Ascending aorta (tissue), 2 donors: ENCODE measurements at regions of chr11 and their contacts with region 1.

Region 1: DNA sequence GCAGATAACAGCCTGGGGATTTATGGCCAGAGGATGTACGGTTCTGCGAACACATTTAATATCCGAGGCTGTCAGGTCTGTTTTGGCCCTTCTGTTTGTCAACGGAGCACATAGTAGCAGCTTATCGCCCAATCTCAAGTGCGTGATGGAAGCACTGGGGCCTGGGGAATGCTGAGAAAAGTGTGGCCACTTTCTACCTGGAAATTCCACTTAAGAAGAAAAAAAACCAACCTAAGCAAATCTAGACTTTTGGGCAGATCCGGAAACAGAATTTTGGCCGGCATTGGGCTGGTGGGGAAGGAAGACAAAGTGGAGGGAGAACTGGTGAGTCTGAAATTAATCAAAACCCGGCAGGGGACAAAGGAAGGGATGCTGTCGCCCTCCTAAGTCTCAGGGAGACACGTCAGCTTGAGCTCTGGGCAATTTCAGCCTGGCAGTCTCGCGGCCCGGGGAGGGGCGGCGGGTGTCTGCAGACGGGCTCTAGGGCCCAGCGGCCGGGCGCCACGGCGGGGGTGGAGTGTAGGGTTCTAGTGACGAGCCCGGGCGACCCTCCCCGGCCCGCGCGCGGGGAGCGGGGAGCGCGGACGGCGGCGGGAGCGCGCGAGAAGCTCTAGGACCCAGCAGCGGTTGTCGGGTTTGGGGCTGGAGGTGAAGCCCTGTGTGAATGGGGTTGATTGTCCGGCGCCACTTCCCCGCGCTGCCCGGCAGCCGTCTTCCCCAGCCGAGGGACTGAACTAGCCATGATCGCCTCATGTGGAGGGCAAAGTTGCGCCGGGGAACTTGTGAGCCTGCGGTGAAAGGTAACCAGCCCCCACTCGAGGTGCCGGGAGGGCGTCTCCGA is at the start of gene AMOTL1:
- DNase-seq: peak; percentile 73 to 96
- H3K4me3 ChIP-seq: peak within 1 kb of the TSS; percentile 82 to 98
- H3K27ac ChIP-seq: peak within 1 kb of the TSS; percentile 89 to 98
- H3K4me1 ChIP-seq: peaks cover 0 to 15% of the 10 kb centered on the region in 2 donors
- H3K27me3 ChIP-seq: no peaks in the 10 kb centered on the region
- CTCF ChIP-seq: peak in 1 of 3 experiments; percentile 34
- total RNA-seq, gene AMOTL1: 32.6 TPM

Region 2: GRCh38 chr11:94543695-94544645 is 224.0 kb before region 1 on chr11 and contains the start of gene FUT4:
- intact Hi-C with region 1: loop called (anchors 10 kb)
- DNase-seq: peak; percentile 44 to 90
- H3K4me3 ChIP-seq: peak within 1 kb of the TSS; percentile 81 to 93
- H3K27ac ChIP-seq: peak within 1 kb of the TSS; percentile 97 to 100
- H3K4me1 ChIP-seq: peaks cover 7 to 14% of the 10 kb centered on the region in 2 donors
- H3K27me3 ChIP-seq: no peaks in the 10 kb centered on the region
- CTCF ChIP-seq: no peak
- total RNA-seq, gene FUT4: 3.2 TPM

Region 3: DNA sequence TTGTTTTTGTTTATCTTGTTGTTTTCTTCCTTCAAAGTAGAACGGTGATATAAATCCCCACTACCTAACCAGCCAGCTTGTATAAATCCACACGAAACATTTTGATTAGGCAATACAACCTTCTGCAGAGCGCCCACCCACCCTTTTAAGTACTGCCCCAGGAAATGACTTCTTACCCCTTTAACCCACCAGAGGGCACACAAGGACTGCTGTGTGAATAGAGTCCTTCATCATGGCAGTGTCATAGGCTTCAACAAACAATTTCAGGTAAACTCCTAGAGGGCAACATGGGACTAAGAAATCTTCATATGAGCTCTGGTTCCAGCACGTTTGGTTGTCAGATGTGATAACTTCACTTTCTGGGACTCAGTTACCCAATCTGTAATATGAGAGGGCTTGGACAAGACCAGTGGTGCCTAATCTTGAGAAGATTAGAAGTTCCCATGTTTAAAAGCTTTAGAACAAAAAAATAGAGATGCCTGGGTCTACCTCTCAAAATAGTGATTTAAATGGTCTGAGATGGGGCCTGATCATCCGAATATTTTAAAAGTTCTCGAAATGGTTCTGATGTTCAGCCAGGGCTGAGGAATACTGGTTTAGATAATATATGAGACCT is 144.8 kb before region 1 on chr11:
- intact Hi-C with region 1: loop called (anchors 10 kb)
- DNase-seq: no peak
- H3K4me3 ChIP-seq: no peak overlapping the region
- H3K27ac ChIP-seq: no peak overlapping the region
- H3K4me1 ChIP-seq: no peaks in the 10 kb centered on the region
- H3K27me3 ChIP-seq: no peaks in the 10 kb centered on the region
- CTCF ChIP-seq: peak; percentile 65 to 72 (median 68)

Region 4: GRCh38 chr11:94741022-94741679 is 26.8 kb before region 1 on chr11:
- intact Hi-C with region 1: loop called (anchors 2 kb)
- DNase-seq: no peak
- H3K4me3 ChIP-seq: peak overlapping the region; percentile 74
- H3K27ac ChIP-seq: no peak overlapping the region
- H3K4me1 ChIP-seq: peaks cover 4 to 5% of the 10 kb centered on the region in 2 donors
- H3K27me3 ChIP-seq: no peaks in the 10 kb centered on the region
- CTCF ChIP-seq: peak; percentile 23 to 52 (median 47)

Region 5: DNA sequence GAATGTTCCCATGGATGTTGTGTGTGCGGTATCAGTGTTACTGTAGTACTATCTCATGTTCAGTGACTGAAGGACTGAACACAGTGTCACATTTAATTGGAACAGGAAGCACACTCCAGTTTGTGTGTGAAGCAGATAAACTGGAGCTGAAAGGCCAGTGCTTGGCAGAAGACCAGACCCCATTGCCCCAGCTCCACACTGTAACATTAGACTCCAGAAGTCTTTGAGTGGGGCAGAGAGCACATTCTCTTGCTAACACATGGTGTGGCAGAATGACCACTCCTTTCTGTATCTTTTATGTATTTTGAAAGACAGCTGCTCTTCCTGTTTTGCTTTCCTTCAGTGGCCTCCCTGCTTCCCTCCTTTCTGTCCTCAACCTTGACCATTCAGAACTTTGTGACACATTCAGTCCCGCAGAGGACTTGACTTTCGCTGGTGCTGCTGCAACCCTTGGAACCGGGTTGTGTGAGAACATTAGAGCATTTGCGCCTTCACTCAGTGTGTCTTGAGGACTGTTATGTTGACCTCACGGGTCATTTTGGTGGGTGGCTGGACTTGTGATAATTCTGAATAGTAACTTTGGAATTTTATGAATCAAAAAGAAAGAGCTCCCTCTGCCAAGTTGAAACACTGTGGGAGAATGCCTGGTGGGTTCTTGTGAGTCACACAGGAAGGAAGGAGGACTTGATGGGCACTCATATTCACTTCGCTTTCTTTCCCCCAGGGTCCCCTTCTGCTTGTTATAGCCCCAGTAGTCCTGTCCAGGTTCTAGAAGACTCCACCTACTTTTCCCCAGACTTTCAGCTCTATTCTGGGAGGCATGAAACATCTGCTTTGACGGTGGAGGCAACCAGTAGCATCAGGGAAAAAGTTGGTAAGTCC is 26.5 kb after region 1 on chr11:
- intact Hi-C with region 1: loop called (anchors 2 kb)
- DNase-seq: peak in 1 of 2 donors; percentile 90
- H3K4me3 ChIP-seq: peak overlapping the region; percentile 34 to 36
- H3K27ac ChIP-seq: peak overlapping the region; percentile 75 to 81
- H3K4me1 ChIP-seq: peaks cover 7 to 32% of the 10 kb centered on the region in 2 donors
- H3K27me3 ChIP-seq: no peaks in the 10 kb centered on the region
- CTCF ChIP-seq: no peak